ENCODE measurements at regions of chrX and their contacts with region 1.

Region 1: GRCh38 chrX:116490104-116490503 is 27.3 kb upstream of the CT83 start:
- ATAC-seq: no peak
- H3K4me3 ChIP-seq: no peak overlapping the region
- H3K27ac ChIP-seq: no peak overlapping the region
- H3K4me1 ChIP-seq: no peaks in the 10 kb centered on the region

Region 2: GRCh38 chrX:116204932-116205331 is 285.2 kb before region 1 on chrX:
- in situ Hi-C with region 1: loop called in 1 of 9 experiments (anchors 25 kb)
- ATAC-seq: no peak
- H3K4me3 ChIP-seq: no peak overlapping the region
- H3K27ac ChIP-seq: no peak overlapping the region
- H3K4me1 ChIP-seq: no peaks in the 10 kb centered on the region

Region 3: DNA sequence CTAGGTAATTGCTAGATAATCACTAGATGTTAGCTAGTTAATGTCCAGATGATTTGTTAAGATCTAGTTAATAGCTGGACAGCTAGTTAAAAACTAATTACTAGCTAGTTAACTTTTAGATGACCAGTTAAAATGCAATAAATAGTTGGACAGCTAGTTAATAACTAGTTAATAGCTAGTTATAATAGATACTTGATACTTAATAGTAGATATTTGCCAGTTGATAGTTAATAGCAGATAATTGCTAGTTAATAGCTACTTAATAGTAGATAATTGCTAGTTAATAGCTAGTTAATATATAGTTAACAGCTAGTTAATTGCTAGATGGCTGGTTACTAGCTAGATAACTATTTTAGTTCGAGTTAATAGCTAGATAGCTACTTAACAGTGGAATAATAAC is 604.0 kb after region 1 on chrX:
- in situ Hi-C with region 1: no loop called
- ATAC-seq: no peak
- H3K4me3 ChIP-seq: no peak overlapping the region
- H3K27ac ChIP-seq: no peak overlapping the region
- H3K4me1 ChIP-seq: no peaks in the 10 kb centered on the region

Measured in motor neuron (in vitro differentiated cells).